ENCODE measurements at regions of chr7 and their contacts with region 1.

Region 1: DNA sequence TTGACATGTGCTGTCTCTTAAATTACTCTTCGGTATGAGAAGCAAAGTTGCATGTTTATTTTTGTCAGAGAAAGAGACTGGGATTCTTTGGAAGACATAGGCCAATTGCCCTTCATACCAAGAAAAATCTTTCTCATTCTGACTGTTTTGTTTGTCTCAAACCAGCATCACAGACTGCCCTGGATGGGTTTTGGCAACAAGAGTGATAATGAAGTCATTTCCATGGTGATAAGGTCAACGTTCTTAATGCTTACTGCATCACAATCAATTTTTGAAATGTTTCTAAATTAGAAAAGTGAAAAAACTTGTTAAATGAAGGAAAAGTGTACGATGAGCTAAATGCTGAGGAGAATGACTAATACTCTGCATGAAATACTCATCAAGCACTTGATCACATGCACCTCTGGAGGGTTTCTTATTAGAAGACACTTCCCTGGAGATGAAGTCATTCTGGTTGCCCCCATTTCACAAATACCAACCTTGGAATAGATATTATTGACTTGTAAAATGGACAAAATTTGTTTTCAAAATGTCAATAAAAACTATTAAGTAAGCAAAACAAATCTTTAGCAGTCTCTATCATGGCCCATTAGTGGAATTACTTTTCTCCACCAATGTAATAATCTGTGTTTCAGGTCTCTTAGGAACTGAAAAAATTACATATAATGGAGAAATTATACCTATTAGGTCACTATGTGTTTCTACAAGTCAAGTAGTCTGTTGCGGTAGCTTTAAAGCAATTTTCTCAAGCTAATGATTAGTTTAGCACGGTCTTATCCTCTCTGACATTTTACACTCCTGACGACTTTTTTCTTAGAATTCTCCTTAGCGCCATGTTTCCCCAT is 19.9 kb upstream of the SEC61G start:
- DNase-seq: no peak
- H3K4me3 ChIP-seq: no peak overlapping the region
- H3K27ac ChIP-seq: no peak overlapping the region
- H3K27me3 ChIP-seq: no peaks in the 10 kb centered on the region
- CTCF ChIP-seq: no peak

Region 2: DNA sequence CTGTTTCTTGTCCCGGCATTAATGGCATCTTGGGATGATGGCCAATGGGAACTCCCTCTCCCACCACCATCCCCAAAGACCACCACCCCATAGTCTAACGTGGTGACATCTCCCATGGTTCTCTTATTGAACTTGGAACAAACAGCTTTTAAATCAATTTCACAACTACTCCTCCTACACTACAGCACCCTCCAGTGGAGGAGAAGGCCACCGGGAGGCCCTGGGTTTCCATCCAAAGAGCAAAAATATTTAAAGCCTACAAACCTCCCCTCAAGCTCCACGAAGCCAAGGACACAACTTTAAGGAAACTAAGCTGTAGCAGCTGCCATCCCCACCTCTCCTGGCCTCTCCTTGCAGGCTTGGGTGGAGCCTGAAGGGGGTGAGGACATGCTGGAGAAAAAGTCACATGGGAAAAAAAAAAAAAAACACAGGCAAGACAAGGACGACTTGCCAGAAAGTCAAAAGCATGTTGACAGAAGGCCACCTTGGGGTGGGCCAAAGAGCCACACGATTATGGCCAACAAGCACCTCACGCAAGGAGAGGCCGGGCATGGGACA is 492.2 kb after region 1 on chr7:
- CTCF ChIA-PET with region 1: interaction called, 177 read pairs
- POLR2A ChIA-PET with region 1: no interaction called
- DNase-seq: no peak
- H3K4me3 ChIP-seq: no peak overlapping the region
- H3K27ac ChIP-seq: no peak overlapping the region
- H3K27me3 ChIP-seq: peaks cover 46% of the 10 kb centered on the region
- CTCF ChIP-seq: peak; percentile 67

Measured in AG04450 (cell line).